ENCODE measurements at regions of chr1 and their contacts with region 1.

Region 1: GRCh38 chr1:115706587-115707425 is 61.7 kb downstream of the CASQ2 start:
- DNase-seq: no peak
- H3K4me3 ChIP-seq: no peak overlapping the region
- H3K27ac ChIP-seq: no peak overlapping the region
- H3K4me1 ChIP-seq: peaks cover 7 to 29% (median 16%) of the 10 kb centered on the region in 3 donors
- H3K27me3 ChIP-seq: peaks cover 0 to 12% (median 0%) of the 10 kb centered on the region in 4 donors
- CTCF ChIP-seq: peak; percentile 29 to 70 (median 47)
- POLR2A ChIP-seq: no peak

Region 2: DNA sequence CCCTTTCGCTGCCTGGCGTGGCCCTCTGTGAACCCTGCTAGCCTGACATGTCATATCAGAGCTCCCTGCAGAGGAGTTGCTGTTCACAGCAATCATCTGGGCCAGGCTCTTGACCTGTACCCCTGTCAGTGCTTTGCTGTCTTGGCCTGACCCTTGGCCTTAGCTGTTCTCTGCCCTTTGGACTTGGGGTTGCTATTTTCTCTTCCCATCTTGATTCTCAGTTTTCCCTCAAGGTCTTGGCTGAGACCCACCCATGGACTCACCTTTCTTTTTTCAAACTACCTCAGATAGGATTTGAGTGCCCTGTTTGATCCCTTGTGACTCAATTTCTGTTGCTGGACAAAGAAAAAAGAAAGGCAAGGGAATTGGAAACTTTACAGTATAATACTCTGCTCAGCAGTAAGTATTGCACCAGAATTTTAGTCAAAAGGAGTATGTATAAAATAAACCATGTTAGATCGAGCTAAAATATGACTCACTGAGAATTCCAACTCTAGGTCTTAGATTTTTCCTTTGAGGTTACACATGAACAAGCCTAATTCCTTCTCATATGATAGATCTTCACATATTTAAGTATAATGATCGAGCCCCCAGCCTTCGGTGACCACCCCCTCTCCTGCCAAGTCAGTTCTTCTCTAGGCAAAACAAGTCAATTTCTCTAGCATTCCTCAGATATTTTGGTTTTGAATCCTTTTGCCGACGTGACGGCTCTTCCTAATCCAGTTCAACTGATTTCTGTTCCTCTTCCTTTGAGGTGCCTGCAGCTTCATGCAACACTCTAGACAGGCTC is 479.3 kb before region 1 on chr1:
- intact Hi-C with region 1: no loop called
- DNase-seq: no peak
- H3K4me3 ChIP-seq: no peak overlapping the region
- H3K27ac ChIP-seq: no peak overlapping the region
- H3K4me1 ChIP-seq: peaks cover 0 to 26% (median 4%) of the 10 kb centered on the region in 3 donors
- H3K27me3 ChIP-seq: no peaks in the 10 kb centered on the region
- CTCF ChIP-seq: no peak
- POLR2A ChIP-seq: no peak

Region 3: GRCh38 chr1:115613767-115614166 is 93.0 kb before region 1 on chr1:
- intact Hi-C with region 1: loop called (anchors 10 kb)
- DNase-seq: no peak
- H3K4me3 ChIP-seq: no peak overlapping the region
- H3K27ac ChIP-seq: no peak overlapping the region
- H3K4me1 ChIP-seq: peaks cover 0 to under 1% (median 0%) of the 10 kb centered on the region in 3 donors
- H3K27me3 ChIP-seq: no peaks in the 10 kb centered on the region
- CTCF ChIP-seq: no peak
- POLR2A ChIP-seq: no peak

Region 4: DNA sequence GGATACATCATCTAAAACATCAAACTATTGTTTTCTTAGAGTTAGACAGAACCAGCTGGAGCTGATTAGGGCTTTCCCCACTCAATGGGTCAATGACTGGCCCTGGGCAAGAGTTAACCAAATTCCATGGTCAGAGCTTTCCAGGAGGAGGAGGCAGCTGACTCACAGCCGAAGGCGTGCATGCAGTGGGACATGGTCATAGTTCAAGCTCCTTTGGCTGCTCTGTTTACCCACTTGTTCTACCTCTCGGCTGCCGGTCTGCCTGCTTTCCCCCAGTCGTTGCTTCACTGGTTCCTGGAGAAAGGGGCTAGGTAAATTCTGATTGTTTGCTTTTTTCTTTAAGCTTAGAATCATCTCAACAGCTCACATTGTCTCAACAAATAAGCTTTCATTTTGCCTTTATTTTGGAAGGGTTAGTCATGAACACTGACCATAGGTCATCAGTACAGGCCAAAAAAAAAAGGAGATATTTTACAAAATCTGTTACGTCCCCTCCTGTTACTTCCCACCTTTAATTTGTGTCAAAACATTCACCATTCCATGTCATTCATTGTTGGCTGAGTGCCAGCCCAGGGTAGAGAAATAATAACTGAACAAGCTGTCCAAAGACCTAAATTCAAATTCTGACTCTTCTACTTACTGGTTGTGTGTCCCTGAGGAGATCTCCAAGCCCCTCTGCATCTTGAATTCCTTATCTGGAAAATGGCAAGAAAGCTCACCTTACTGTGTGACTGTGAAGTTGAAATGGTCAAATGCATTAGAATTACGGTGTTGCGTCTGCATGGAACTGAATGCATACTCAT is 416.4 kb after region 1 on chr1:
- intact Hi-C with region 1: no loop called
- DNase-seq: no peak
- H3K4me3 ChIP-seq: no peak overlapping the region
- H3K27ac ChIP-seq: peak overlapping the region; percentile 48 to 71 (median 57)
- H3K4me1 ChIP-seq: peaks cover 0 to 56% (median 3%) of the 10 kb centered on the region in 3 donors
- H3K27me3 ChIP-seq: no peaks in the 10 kb centered on the region
- CTCF ChIP-seq: no peak
- POLR2A ChIP-seq: no peak